ENCODE measurements at regions of chr5 and their contacts with region 1.

Region 1: GRCh38 chr5:75336625-75337339 is at the start of gene HMGCR:
- DNase-seq: peak; percentile 92
- ATAC-seq: peak; percentile 98
- H3K4me3 Mint-ChIP-seq: no peak within 1 kb of the TSS
- H3K27ac Mint-ChIP-seq: no peak within 1 kb of the TSS
- H3K4me1 Mint-ChIP-seq: peaks cover 26% of the 10 kb centered on the region
- H3K27me3 Mint-ChIP-seq: no peaks in the 10 kb centered on the region
- total RNA-seq, gene HMGCR: 55.2 to 63.9 TPM

Region 2: GRCh38 chr5:75236322-75237316 is 100.2 kb before region 1 on chr5 and contains the start of gene ANKRD31:
- POLR2A ChIA-PET with region 1: interaction called, 23 read pairs
- DNase-seq: peak; percentile 97
- ATAC-seq: peak; percentile 96
- H3K4me3 Mint-ChIP-seq: peak within 1 kb of the TSS; percentile 92
- H3K27ac Mint-ChIP-seq: peak within 1 kb of the TSS; percentile 98
- H3K4me1 Mint-ChIP-seq: peaks cover 14% of the 10 kb centered on the region
- H3K27me3 Mint-ChIP-seq: no peaks in the 10 kb centered on the region
- total RNA-seq, gene ANKRD31: 0.51 to 0.58 TPM

Region 3: GRCh38 chr5:75426215-75426614 is 89.4 kb after region 1 on chr5:
- POLR2A ChIA-PET with region 1: no interaction called
- DNase-seq: no peak
- ATAC-seq: no peak
- H3K4me3 Mint-ChIP-seq: no peak overlapping the region
- H3K27ac Mint-ChIP-seq: no peak overlapping the region
- H3K4me1 Mint-ChIP-seq: no peaks in the 10 kb centered on the region
- H3K27me3 Mint-ChIP-seq: no peaks in the 10 kb centered on the region

Region 4: GRCh38 chr5:75510836-75511434 is 174.2 kb after region 1 on chr5:
- POLR2A ChIA-PET with region 1: interaction called, 10 read pairs
- DNase-seq: no peak
- ATAC-seq: peak; percentile 30
- H3K4me3 Mint-ChIP-seq: peak overlapping the region; percentile 82
- H3K27ac Mint-ChIP-seq: peak overlapping the region; percentile 95
- H3K4me1 Mint-ChIP-seq: peaks cover 34% of the 10 kb centered on the region
- H3K27me3 Mint-ChIP-seq: no peaks in the 10 kb centered on the region

Region 5: GRCh38 chr5:75717082-75717922 is 380.5 kb after region 1 on chr5 and contains the start of gene POC5:
- POLR2A ChIA-PET with region 1: interaction called, 11 read pairs
- DNase-seq: peak; percentile 98
- ATAC-seq: peak; percentile 95
- H3K4me3 Mint-ChIP-seq: peak within 1 kb of the TSS; percentile 100
- H3K27ac Mint-ChIP-seq: peak within 1 kb of the TSS; percentile 99
- H3K4me1 Mint-ChIP-seq: peaks cover 24% of the 10 kb centered on the region
- H3K27me3 Mint-ChIP-seq: no peaks in the 10 kb centered on the region
- total RNA-seq, gene POC5: 16.8 to 23.0 TPM

Measured in activated naive CD8-positive, alpha-beta T cell treated with anti-CD3 and anti-CD28 coated beads, Interleukin-2, amount 10 ng/mL, durations not matched to agents 7 days and 5 days (primary cell).